IMR-90 (cell line): ENCODE measurements at regions of chr3 and their contacts with region 1.

Region 1: DNA sequence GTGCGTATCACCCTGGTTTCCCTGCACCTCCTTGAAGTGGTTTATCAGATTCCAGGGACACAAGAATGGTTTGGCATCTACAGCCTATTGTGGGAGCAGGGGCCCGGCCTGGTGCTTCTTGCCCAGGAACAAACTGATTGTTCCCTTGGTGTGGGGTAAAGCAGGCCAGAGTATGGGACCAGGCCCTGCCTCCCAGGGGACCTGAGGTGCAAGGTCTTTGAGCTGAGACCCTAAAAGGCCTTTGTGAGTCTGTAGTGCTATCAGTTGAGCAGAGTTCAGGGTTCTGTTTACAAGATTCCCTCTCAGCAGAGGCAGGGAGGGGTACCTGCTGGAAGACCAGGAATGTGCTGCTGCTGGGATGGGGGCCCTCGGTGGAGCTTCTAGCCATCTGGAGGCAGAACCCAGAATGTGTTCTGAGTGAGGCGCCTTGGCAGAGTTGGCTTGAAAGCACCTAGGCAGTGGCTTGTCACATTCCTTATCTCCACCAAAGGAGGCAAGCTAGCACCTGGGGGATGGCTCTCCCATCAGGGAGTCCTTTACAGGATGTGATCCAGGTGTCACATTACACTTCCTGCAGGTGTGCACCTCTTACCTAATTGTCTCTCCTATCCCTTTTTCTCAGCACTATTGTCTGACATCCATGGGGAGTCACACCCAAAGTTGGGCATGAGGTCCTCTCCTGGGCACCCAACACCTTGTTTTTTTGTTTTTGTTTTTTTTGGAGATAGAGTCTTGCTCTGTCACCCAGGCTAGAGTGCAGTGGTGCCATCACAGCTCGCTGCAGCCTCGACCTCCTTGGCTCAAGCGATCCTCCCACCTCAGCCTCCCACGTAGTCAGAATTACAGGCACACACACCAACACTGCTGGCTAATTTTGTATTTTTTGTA is 13.1 kb downstream of the FLNB start:
- DNase-seq: no peak
- ATAC-seq: no peak
- H3K4me3 ChIP-seq: no peak overlapping the region
- H3K27ac ChIP-seq: no peak overlapping the region
- H3K4me1 ChIP-seq: peaks cover 27% of the 10 kb centered on the region
- H3K27me3 ChIP-seq: no peaks in the 10 kb centered on the region
- CTCF ChIP-seq: no peak
- POLR2A ChIP-seq: no peak
- RAD21 ChIP-seq: no peak

Region 2: DNA sequence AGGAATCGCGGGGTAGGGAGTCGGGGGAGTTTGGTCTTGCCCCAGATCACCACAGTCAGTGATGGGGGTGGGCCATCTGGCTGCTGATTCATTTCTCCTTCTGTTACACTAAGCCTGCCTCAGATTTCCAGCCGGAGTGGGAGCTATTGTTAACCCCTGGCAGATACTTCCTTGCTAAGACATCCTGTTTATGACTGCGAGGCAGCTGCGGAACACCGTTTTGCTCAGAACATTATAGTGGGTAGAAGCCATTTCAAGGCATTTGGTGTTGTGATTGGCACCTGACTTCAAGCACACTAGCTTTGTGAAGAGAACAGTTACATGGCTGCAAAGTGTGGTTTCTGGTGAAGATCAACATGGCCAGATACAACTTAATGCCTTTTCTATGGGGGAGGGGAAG is 60.7 kb after region 1 on chr3:
- CTCF ChIA-PET with region 1: no interaction called
- POLR2A ChIA-PET with region 1: no interaction called
- dilution Hi-C with region 1: no loop called
- in situ Hi-C with region 1: no loop called
- intact Hi-C with region 1: loop called (anchors 5 kb)
- DNase-seq: peak; percentile 91
- ATAC-seq: peak; percentile 89
- H3K4me3 ChIP-seq: no peak overlapping the region
- H3K27ac ChIP-seq: peak overlapping the region; percentile 30
- H3K4me1 ChIP-seq: peaks cover 7% of the 10 kb centered on the region
- H3K27me3 ChIP-seq: no peaks in the 10 kb centered on the region
- CTCF ChIP-seq: no peak
- POLR2A ChIP-seq: no peak
- RAD21 ChIP-seq: peak; percentile 21